ENCODE measurements at regions of chr5 and their contacts with region 1.

Region 1: GRCh38 chr5:175696139-175696854 is 38.4 kb downstream of the HRH2 start:
- DNase-seq: peak; percentile 63
- H3K4me3 Mint-ChIP-seq: peak overlapping the region; percentile 33
- H3K27ac Mint-ChIP-seq: peak overlapping the region; percentile 78
- H3K4me1 Mint-ChIP-seq: peaks cover 39% of the 10 kb centered on the region
- H3K27me3 Mint-ChIP-seq: no peaks in the 10 kb centered on the region

Region 2: DNA sequence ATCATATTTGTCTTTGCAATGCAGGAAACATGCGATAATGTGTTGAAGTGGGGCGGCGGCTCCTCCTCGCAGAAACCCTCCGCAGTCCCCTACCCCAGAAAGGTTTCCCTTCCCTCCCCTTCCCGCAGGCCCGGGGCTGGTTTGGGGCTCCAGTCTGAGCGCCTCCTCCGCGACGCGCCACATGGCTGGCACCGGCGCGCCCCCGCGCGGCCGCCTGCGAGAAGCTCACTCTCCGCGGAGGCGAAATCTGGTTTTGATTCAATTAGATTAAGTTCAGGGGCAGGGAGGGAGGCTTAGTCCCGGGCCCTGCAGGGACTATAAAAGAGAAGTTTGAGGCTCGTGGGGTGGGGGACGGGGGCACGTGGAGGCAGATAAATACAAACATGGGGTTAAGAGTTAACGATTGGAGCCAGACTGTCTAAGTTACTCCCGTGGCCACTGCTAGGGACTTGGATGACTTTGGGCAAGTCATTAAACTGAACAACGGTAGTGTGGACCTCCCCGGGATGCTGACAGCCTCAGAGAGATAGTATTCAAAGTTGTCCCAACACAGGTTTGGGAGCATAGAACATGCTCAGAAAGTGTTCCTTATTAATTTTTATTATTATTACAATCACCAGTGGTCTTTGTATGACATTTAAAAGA is 902.5 kb before region 1 on chr5:
- intact Hi-C with region 1: no loop called
- DNase-seq: peak; percentile 26
- H3K4me3 Mint-ChIP-seq: no peak overlapping the region
- H3K27ac Mint-ChIP-seq: no peak overlapping the region
- H3K4me1 Mint-ChIP-seq: peaks cover 8% of the 10 kb centered on the region
- H3K27me3 Mint-ChIP-seq: peaks cover 4% of the 10 kb centered on the region

Region 3: GRCh38 chr5:175718401-175719108 is 22.3 kb after region 1 on chr5:
- intact Hi-C with region 1: loop called (anchors 2 kb)
- DNase-seq: peak; percentile 38
- H3K4me3 Mint-ChIP-seq: no peak overlapping the region
- H3K27ac Mint-ChIP-seq: no peak overlapping the region
- H3K4me1 Mint-ChIP-seq: peaks cover 7% of the 10 kb centered on the region
- H3K27me3 Mint-ChIP-seq: peaks cover 4% of the 10 kb centered on the region

Measured in activated T-helper 1 cell treated with anti-CD3 and anti-CD28 coated beads, Interleukin-12 subunit alpha, Interleukin-12 subunit beta, Interleukin-2, Interleukin-4 antibody, amounts not matched to agents 30 ng/mL and 10 ng/mL and 1 ng/mL, durations not matched to agents 14 hours and 24 hours and 36 hours (primary cell).